Sigmoid colon (tissue), 7 donors: ENCODE measurements at regions of chr3 and their contacts with region 1.

Region 1: DNA sequence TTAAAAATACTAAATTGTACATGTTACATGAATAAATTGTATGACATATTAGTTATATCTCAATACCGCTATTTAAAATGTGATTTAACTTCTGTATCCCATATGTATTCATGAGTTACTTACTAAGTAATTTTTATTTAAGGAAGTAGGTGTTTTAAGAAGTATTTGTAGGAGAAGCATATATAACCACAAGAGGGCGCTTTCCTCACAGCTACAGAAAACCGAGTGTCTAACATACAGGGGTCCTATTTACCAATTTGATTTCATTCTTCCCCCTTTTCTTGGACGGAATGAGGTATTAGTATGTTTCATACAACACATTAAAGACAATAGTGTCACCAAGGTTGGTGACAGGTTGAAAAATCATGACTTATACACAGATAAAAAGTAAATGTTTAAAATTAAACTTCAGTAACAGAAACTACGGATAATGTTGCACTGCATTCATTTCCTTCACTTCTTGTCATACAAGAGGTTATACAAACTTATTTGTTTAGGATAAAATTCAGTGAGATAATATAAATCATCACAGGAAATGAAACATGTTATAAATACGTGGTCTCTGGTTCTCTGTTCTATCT is 253.6 kb downstream of the MAGI1 start:
- DNase-seq: no peak
- H3K4me3 ChIP-seq: no peak overlapping the region
- H3K27ac ChIP-seq: no peak overlapping the region
- H3K4me1 ChIP-seq: peaks cover 0 to 16% (median 9%) of the 10 kb centered on the region in 4 donors
- H3K27me3 ChIP-seq: no peaks in the 10 kb centered on the region
- CTCF ChIP-seq: peak; percentile 49 to 68 (median 58)
- EP300 ChIP-seq: no peak
- POLR2A ChIP-seq: no peak

Region 2: GRCh38 chr3:65483480-65483879 is 301.7 kb before region 1 on chr3:
- intact Hi-C with region 1: no loop called
- DNase-seq: peak; percentile 83
- H3K4me3 ChIP-seq: no peak overlapping the region
- H3K27ac ChIP-seq: peak overlapping the region in 2 of 4 donors; percentile 46 to 64
- H3K4me1 ChIP-seq: peaks cover 0 to 58% (median 46%) of the 10 kb centered on the region in 4 donors
- H3K27me3 ChIP-seq: no peaks in the 10 kb centered on the region
- CTCF ChIP-seq: no peak
- EP300 ChIP-seq: no peak
- POLR2A ChIP-seq: no peak

Region 3: DNA sequence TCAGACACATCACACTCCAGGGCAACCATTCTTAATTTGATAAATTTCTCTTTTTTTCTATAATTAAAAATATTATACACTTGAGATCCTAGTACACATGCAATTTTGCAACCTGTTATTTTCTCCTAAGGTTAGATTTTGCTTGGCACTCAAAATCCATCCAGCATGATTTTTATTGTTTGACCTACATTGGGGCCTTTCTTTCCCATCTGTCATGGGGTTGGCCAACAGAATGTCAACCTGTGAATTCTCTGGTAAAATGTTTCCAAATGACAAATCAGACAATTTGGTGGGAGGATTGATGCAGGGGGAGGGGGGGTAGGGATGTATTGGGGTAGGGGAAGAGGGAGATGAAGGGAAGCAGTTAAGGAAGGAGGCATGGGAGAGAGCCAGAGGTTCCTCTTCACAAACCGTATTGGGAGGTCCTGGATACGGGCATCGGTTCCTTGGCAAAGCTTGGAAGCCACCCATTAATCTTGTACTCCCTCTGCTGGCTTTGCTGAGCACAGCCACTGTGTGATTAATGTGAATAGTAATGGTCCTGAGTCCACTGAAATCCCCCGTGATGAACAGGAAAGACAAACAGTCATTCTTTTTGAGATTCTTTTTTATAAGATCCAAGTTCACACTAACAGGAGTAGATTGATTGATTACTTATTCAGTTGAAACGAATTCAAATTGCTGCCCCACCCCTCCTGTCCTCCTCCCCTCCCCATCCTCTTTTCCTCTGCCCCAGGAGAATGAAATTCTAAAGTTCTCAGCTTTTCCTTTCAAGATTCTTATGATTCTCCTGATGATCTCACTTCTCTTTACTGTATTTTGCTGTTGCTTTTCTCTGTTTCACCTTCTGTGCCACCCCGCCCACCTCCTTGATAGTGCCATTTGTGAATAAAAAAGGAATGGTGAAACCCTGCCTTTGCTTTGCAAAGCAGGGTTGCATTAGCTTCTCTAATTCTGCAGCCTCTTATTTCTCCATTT is 353.5 kb after region 1 on chr3:
- intact Hi-C with region 1: loop called (anchors 2 kb)
- DNase-seq: peak; percentile 69
- H3K4me3 ChIP-seq: no peak overlapping the region
- H3K27ac ChIP-seq: no peak overlapping the region
- H3K4me1 ChIP-seq: no peaks in the 10 kb centered on the region
- H3K27me3 ChIP-seq: no peaks in the 10 kb centered on the region
- CTCF ChIP-seq: peak; percentile 22 to 81 (median 70)
- EP300 ChIP-seq: no peak
- POLR2A ChIP-seq: no peak

Region 4: DNA sequence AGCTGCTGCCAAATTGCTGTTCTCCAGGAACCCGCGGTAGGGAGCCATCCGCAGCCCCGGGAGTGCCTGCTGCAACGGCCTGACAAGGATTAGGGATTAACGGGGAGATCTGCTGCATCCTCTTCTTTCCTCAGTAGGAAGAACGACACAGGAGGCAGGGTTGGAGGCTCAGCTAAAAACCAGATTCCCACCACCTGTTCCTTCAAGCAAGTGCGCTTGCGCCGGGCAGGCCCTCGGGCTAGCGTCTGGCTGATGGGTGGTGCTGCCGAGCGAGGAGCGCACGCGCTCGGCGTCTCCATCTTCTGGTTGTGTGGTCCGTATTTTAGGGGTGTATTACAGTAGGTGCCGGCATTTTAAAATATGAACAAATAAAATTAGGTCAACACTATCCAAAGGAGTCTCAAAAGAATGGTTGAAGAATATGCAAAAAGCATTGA is 410.2 kb after region 1 on chr3:
- intact Hi-C with region 1: loop called (anchors 10 kb)
- DNase-seq: peak; percentile 67
- H3K4me3 ChIP-seq: peak overlapping the region in 3 of 4 donors; percentile 14 to 30 (median 21)
- H3K27ac ChIP-seq: no peak overlapping the region
- H3K4me1 ChIP-seq: peaks cover 0 to 4% (median 2%) of the 10 kb centered on the region in 4 donors
- H3K27me3 ChIP-seq: no peaks in the 10 kb centered on the region
- CTCF ChIP-seq: no peak
- EP300 ChIP-seq: no peak
- POLR2A ChIP-seq: no peak

Region 5: DNA sequence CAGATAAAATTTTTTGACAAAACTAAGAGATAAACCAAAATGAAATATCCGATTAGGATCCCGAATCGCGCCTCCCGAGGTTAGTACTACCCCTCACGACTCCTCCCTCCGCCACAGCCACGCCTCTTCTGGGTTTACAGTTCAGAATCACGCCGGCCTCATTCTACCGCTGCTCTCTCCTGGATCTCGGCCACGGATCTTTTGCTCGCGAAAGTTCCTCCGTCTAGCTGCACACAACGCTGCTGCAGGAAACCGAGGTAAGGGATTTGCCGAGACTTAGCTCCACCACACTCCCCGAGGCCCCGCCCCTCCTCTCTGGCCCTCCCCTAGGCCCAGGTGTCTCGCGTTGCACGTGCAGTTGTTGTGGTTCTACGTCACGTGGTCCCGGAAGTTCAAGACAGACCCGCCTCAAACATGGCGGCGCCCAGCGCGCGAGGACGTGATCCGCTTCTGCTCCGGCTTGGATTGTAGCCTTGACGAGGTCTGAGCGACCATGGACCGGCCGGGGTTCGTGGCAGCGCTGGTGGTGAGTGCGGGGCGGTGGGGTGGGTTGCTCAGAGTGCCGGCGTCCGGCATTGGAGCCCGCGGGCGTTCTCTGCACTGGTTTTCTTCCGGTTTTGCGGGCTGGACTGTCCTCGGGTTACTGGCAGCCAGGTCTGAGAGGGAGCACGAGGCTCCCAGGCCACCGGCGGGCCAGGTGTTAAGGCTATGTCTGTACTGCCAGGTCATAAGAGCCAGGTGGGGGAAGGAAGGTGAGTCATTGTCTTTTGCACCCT is 435.6 kb after region 1 on chr3 and contains the start of gene SLC25A26:
- intact Hi-C with region 1: loop called (anchors 10 kb)
- DNase-seq: peak; percentile 98
- H3K4me3 ChIP-seq: peak within 1 kb of the TSS; percentile 68 to 89 (median 80)
- H3K27ac ChIP-seq: peak within 1 kb of the TSS; percentile 71 to 82 (median 76)
- H3K4me1 ChIP-seq: peaks cover 0 to 15% (median 8%) of the 10 kb centered on the region in 4 donors
- H3K27me3 ChIP-seq: no peaks in the 10 kb centered on the region
- CTCF ChIP-seq: no peak
- EP300 ChIP-seq: no peak
- POLR2A ChIP-seq: peak in 1 of 2 donors; percentile 13
- total RNA-seq, gene SLC25A26: 22.4 to 42.8 (median 28.9) TPM